GM12878 (cell line): ENCODE measurements at regions of chr1 and their contacts with region 1.

Region 1: DNA sequence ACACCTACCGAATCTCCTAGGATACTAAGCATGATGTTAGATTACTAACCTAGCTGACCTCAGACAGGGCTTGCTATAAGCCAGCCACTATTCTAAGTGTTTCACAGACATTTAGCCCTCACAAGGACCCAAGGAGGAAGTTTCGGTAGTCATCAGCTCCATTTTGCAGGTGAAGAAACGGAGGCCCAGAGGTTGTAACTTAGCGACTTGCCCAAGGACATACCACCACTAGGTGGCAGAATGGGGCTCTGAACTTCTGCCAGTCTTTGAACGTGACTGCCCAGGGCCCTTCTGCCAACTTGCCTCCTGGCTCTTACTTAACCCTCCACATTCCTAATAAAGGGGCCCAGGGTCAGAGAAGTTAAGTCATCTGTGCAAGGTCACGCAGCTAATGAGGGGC is 283.5 kb downstream of the C1orf94 start:
- DNase-seq: peak; percentile 31
- ATAC-seq: peak; percentile 90
- H3K4me3 ChIP-seq: no peak overlapping the region
- H3K27ac ChIP-seq: no peak overlapping the region
- H3K4me1 ChIP-seq: no peaks in the 10 kb centered on the region; the same call in 1 of the 2 replicates
- H3K27me3 ChIP-seq: no peaks in the 10 kb centered on the region
- CTCF ChIP-seq: peak; percentile 74 to 84 (median 80)
- EP300 ChIP-seq: no peak
- POLR2A ChIP-seq: no peak
- RAD21 ChIP-seq: peak; percentile 80

Region 2: DNA sequence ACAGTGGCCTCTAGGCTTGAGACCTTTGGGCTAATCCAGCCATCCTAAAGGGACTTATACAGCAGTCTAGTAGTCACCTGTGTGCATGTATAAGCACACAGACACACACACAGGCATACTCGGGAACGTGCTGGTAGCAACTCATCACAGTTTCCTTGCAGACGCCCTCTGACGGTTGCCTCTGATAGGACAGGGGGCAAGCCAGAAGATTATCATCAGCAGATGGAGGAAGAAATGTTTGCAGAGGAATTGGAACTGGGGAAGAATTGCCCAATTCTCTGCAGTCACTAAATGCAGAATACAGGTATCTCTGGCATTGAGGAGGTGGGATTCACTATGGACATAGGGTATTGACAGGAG is 61.3 kb before region 1 on chr1:
- CTCF ChIA-PET with region 1: no interaction called
- POLR2A ChIA-PET with region 1: no interaction called
- RAD21 ChIA-PET with region 1: no interaction called
- SMC1A ChIA-PET with region 1: no interaction called
- in situ Hi-C with region 1: no loop called
- intact Hi-C with region 1: no loop called
- DNase-seq: no peak
- ATAC-seq: no peak
- H3K4me3 ChIP-seq: no peak overlapping the region
- H3K27ac ChIP-seq: no peak overlapping the region
- H3K4me1 ChIP-seq: no peaks in the 10 kb centered on the region
- H3K27me3 ChIP-seq: no peaks in the 10 kb centered on the region
- CTCF ChIP-seq: peak in 2 of 3 experiments; percentile 0 to 19; a peak in 1 of 6 replicates
- EP300 ChIP-seq: no peak
- POLR2A ChIP-seq: no peak
- RAD21 ChIP-seq: no peak

Region 3: DNA sequence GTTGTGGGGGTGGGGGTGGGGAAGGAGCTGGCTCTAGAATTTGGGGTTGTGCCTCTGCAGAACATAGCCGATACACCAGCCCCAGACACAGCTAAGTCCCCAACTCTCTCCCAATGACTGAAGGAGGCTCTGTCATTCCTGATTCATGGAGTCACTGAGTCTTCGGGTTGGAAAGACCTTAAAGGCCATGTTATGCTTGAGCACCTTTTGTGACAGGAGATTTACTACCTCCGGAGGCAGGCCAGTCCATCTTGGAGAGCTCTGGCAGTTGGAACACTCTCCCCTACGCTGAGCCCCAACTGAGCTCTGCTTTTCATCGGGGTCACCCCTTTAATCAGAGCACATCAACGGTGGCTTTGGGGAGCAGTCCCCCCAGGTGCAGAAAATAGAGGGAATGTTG is 10.2 kb after region 1 on chr1:
- CTCF ChIA-PET with region 1: interaction called, 27 read pairs
- POLR2A ChIA-PET with region 1: no interaction called
- RAD21 ChIA-PET with region 1: no interaction called
- SMC1A ChIA-PET with region 1: interaction called, 5 read pairs
- in situ Hi-C with region 1: no loop called
- intact Hi-C with region 1: no loop called
- DNase-seq: no peak
- ATAC-seq: no peak
- H3K4me3 ChIP-seq: no peak overlapping the region
- H3K27ac ChIP-seq: no peak overlapping the region
- H3K4me1 ChIP-seq: no peaks in the 10 kb centered on the region
- H3K27me3 ChIP-seq: peaks cover 0 to 2% of the 10 kb centered on the region in 2 experiments; a peak in 1 of 4 replicates
- CTCF ChIP-seq: no peak
- EP300 ChIP-seq: no peak
- POLR2A ChIP-seq: no peak
- RAD21 ChIP-seq: no peak

Region 4: GRCh38 chr1:34479731-34480130 is 19.5 kb after region 1 on chr1:
- CTCF ChIA-PET with region 1: interaction called, 14 read pairs
- POLR2A ChIA-PET with region 1: no interaction called
- RAD21 ChIA-PET with region 1: interaction called, 4 read pairs
- SMC1A ChIA-PET with region 1: interaction called, 3 read pairs
- in situ Hi-C with region 1: no loop called
- intact Hi-C with region 1: no loop called
- DNase-seq: no peak
- ATAC-seq: no peak
- H3K4me3 ChIP-seq: no peak overlapping the region
- H3K27ac ChIP-seq: no peak overlapping the region
- H3K4me1 ChIP-seq: no peaks in the 10 kb centered on the region
- H3K27me3 ChIP-seq: no peaks in the 10 kb centered on the region
- CTCF ChIP-seq: no peak
- EP300 ChIP-seq: no peak
- POLR2A ChIP-seq: no peak
- RAD21 ChIP-seq: no peak

Region 5: GRCh38 chr1:34590211-34590623 is 130.0 kb after region 1 on chr1:
- CTCF ChIA-PET with region 1: interaction called, 311 read pairs
- POLR2A ChIA-PET with region 1: interaction called, 5 read pairs
- RAD21 ChIA-PET with region 1: interaction called, 108 read pairs
- SMC1A ChIA-PET with region 1: interaction called, 203 read pairs
- in situ Hi-C with region 1: loop called (anchors 5 kb)
- intact Hi-C with region 1: loop called (anchors 1 kb)
- DNase-seq: peak; percentile 16
- ATAC-seq: no peak
- H3K4me3 ChIP-seq: no peak overlapping the region
- H3K27ac ChIP-seq: no peak overlapping the region
- H3K4me1 ChIP-seq: peaks cover 10% of the 10 kb centered on the region; the same call in 1 of the 2 replicates
- H3K27me3 ChIP-seq: no peaks in the 10 kb centered on the region
- CTCF ChIP-seq: no peak
- EP300 ChIP-seq: no peak
- POLR2A ChIP-seq: no peak
- RAD21 ChIP-seq: no peak

Region 6: GRCh38 chr1:34742667-34743270 is 282.6 kb after region 1 on chr1:
- CTCF ChIA-PET with region 1: interaction called, 13 read pairs
- POLR2A ChIA-PET with region 1: no interaction called
- RAD21 ChIA-PET with region 1: interaction called, 12 read pairs
- SMC1A ChIA-PET with region 1: interaction called, 5 read pairs
- in situ Hi-C with region 1: no loop called
- intact Hi-C with region 1: loop called (anchors 5 kb)
- DNase-seq: peak; percentile 2
- ATAC-seq: peak; percentile 100
- H3K4me3 ChIP-seq: no peak overlapping the region
- H3K27ac ChIP-seq: no peak overlapping the region
- H3K4me1 ChIP-seq: no peaks in the 10 kb centered on the region
- H3K27me3 ChIP-seq: no peaks in the 10 kb centered on the region; a peak in 1 of 4 replicates
- CTCF ChIP-seq: peak; percentile 94 to 99 (median 94)
- EP300 ChIP-seq: no peak
- POLR2A ChIP-seq: no peak
- RAD21 ChIP-seq: peak; percentile 74